Activated B cell treated with CpG ODN at 0.5 μM for 24 hours (primary cell): ENCODE measurements at regions of chr4 and their contacts with region 1.

Region 1: GRCh38 chr4:140049024-140049848 is 104.7 kb downstream of the MAML3 start:
- DNase-seq: no peak
- ATAC-seq: peak; percentile 81
- H3K4me3 Mint-ChIP-seq: peak overlapping the region; percentile 74
- H3K27ac Mint-ChIP-seq: peak overlapping the region; percentile 33
- H3K4me1 Mint-ChIP-seq: peaks cover 33% of the 10 kb centered on the region
- H3K27me3 Mint-ChIP-seq: peaks cover 14% of the 10 kb centered on the region
- CTCF ChIP-seq: no peak

Region 2: DNA sequence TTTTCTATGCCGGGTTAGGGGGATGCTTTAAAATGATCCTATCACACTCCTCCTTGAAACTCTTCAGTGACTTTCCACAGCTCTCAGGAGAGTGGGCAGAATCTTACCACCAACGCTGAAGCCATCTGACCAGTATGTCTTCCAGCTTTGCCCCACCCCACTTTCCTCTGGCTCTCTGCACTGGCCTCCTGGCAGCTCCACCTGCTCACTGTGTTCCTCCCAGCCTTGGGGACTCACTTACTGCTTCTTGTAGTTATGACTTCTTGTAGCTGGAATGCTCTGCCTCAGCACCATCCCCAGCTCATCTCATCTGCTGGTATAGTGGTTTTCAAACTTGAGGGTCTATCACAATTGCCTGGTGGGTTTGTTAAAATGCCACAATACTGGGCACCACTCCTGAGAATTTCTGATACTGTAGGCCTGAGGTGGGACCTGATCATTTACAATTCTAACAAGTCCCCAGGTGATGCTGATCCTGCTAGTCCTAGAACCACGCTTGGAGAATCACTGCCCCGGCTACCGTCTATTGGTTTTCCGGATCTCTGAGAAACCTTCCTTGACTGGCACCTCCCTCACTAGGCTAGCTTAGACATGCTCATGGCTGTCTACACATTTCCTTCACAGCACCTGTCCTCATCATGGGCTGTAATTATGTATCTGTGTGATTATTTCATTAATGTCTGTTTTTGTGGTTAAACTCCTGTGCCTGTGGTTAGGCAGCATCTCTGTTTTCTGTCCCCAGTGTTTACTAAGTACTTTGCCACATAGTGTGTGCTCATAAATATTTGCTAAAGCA is 231.4 kb before region 1 on chr4:
- CTCF ChIA-PET with region 1: no interaction called
- POLR2A ChIA-PET with region 1: no interaction called
- intact Hi-C with region 1: no loop called
- DNase-seq: no peak
- ATAC-seq: no peak
- H3K4me3 Mint-ChIP-seq: no peak overlapping the region
- H3K27ac Mint-ChIP-seq: no peak overlapping the region
- H3K4me1 Mint-ChIP-seq: no peaks in the 10 kb centered on the region
- H3K27me3 Mint-ChIP-seq: no peaks in the 10 kb centered on the region
- CTCF ChIP-seq: no peak

Region 3: GRCh38 chr4:139978692-139979091 is 70.5 kb before region 1 on chr4:
- CTCF ChIA-PET with region 1: no interaction called
- POLR2A ChIA-PET with region 1: no interaction called
- intact Hi-C with region 1: loop called (anchors 2 kb)
- DNase-seq: peak; percentile 33
- ATAC-seq: peak; percentile 87
- H3K4me3 Mint-ChIP-seq: peak overlapping the region; percentile 65
- H3K27ac Mint-ChIP-seq: peak overlapping the region; percentile 65
- H3K4me1 Mint-ChIP-seq: peaks cover 55% of the 10 kb centered on the region
- H3K27me3 Mint-ChIP-seq: no peaks in the 10 kb centered on the region
- CTCF ChIP-seq: no peak

Region 4: DNA sequence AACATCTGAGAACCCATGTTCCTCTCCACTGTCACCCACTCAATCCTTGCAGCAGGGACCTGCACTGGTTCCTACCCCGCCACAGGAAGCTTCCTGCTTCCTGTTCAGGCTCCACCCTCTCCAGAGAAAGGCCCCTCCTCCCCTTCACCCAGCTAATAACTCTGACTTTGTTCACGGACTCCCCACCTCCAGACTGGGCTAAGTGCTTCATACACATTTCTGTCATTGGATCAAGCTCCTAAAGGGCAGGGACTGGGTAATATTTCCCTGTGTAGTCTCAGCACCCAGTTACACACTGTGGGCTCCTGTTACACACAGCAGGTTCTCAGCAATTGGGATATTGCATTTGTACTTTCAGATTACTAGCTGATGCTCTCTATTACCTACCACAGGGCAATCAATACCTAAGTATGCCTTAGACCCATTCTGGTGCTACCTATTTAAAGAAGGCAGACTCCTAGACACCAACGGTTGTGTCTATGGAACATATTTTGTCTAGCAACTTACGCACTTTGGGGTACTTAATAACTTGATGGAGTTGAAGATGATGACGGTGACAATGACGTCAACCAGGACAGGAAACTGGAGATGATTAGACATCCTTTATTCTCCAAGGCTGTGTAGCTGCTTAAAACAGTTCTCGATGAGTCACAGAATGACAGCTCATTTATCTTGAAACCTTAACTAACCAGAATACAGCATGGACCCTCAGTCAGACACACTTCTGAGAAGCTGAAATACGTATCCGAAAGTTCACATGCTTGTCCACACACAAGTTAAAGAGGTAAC is 46.7 kb after region 1 on chr4:
- CTCF ChIA-PET with region 1: interaction called, 4 read pairs
- POLR2A ChIA-PET with region 1: no interaction called
- intact Hi-C with region 1: loop called (anchors 2 kb)
- DNase-seq: no peak
- ATAC-seq: peak; percentile 56
- H3K4me3 Mint-ChIP-seq: peak overlapping the region; percentile 56
- H3K27ac Mint-ChIP-seq: peak overlapping the region; percentile 76
- H3K4me1 Mint-ChIP-seq: peaks cover 77% of the 10 kb centered on the region
- H3K27me3 Mint-ChIP-seq: peaks cover 11% of the 10 kb centered on the region
- CTCF ChIP-seq: no peak